ENCODE measurements at regions of chr9 and their contacts with region 1.

Region 1: DNA sequence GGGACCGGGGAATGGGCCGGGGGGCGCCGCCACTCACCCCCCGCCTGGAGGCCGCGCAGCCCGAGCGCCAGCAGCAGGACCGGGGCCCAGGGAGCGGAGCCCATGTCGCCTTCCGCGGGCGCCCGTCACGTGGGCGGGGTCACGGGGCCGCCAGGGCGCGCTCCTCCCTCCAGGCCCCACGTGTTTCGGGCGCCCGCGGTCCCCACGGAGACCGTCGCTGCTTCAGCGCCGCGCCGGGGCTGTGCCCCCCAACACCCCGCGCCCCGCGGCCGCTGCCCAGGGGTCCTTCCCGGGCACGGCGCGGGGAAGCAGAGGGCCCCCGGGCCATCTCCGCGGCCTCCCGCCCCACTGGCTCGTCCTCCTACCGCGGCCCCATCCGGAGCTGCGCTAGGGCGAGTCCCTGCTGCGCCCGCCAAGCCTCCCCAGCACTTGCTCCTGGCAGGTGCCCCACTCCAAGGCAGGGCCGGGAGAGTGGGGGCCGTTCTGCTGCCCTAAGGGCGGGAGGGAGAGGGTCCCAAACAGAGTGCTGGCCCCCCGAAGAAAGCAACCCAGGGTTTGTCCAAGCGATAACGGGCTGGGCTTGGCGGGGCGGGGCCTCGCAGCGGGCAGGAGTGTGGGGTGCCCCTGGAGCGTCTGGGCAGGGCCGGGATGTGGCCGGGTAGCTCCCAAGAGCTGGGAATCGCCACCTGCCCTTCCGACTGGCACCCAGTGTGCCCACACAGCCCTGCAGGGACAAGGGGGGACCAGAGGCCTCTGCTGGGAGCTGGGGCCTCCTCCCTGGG is at the start of gene DPP7:
- DNase-seq: peak; percentile 58 to 84
- ATAC-seq: peak; percentile 91
- total RNA-seq, gene DPP7: 53.1 to 66.0 TPM

Region 2: GRCh38 chr9:137236238-137236935 is 121.6 kb after region 1 on chr9:
- intact Hi-C with region 1: loop called in 1 of 2 experiments (anchors 10 kb)
- DNase-seq: peak; percentile 84 to 96
- ATAC-seq: peak; percentile 38

Region 3: GRCh38 chr9:137326445-137327065 is 211.8 kb after region 1 on chr9:
- intact Hi-C with region 1: no loop called
- DNase-seq: no peak
- ATAC-seq: peak; percentile 13

Region 4: GRCh38 chr9:137804908-137805630 is 690.3 kb after region 1 on chr9:
- intact Hi-C with region 1: no loop called
- DNase-seq: no peak
- ATAC-seq: no peak